ENCODE measurements at regions of chr18 and their contacts with region 1.

Region 1: GRCh38 chr18:58768293-58768974 is 96.2 kb upstream of the ZNF532 start:
- DNase-seq: peak; percentile 90
- H3K4me3 Mint-ChIP-seq: peak overlapping the region; percentile 67
- H3K27ac Mint-ChIP-seq: no peak overlapping the region
- H3K4me1 Mint-ChIP-seq: no peaks in the 10 kb centered on the region
- H3K27me3 Mint-ChIP-seq: peaks cover 27% of the 10 kb centered on the region
- CTCF ChIP-seq: peak; percentile 85

Region 2: GRCh38 chr18:58400337-58400870 is 368.0 kb before region 1 on chr18:
- CTCF ChIA-PET with region 1: interaction called, 3 read pairs
- intact Hi-C with region 1: loop called (anchors 1 kb)
- DNase-seq: no peak
- H3K4me3 Mint-ChIP-seq: no peak overlapping the region
- H3K27ac Mint-ChIP-seq: no peak overlapping the region
- H3K4me1 Mint-ChIP-seq: no peaks in the 10 kb centered on the region
- H3K27me3 Mint-ChIP-seq: no peaks in the 10 kb centered on the region
- CTCF ChIP-seq: no peak

Region 3: GRCh38 chr18:58493516-58494253 is 274.7 kb before region 1 on chr18:
- CTCF ChIA-PET with region 1: interaction called, 13 read pairs
- intact Hi-C with region 1: loop called (anchors 10 kb)
- DNase-seq: peak; percentile 80
- H3K4me3 Mint-ChIP-seq: no peak overlapping the region
- H3K27ac Mint-ChIP-seq: no peak overlapping the region
- H3K4me1 Mint-ChIP-seq: peaks cover 46% of the 10 kb centered on the region
- H3K27me3 Mint-ChIP-seq: peaks cover 4% of the 10 kb centered on the region
- CTCF ChIP-seq: peak; percentile 72

Region 4: GRCh38 chr18:59070181-59070912 is 301.9 kb after region 1 on chr18:
- CTCF ChIA-PET with region 1: interaction called, 43 read pairs
- intact Hi-C with region 1: loop called (anchors 1 kb)
- DNase-seq: peak; percentile 95
- H3K4me3 Mint-ChIP-seq: no peak overlapping the region
- H3K27ac Mint-ChIP-seq: no peak overlapping the region
- H3K4me1 Mint-ChIP-seq: peaks cover 30% of the 10 kb centered on the region
- H3K27me3 Mint-ChIP-seq: no peaks in the 10 kb centered on the region
- CTCF ChIP-seq: peak; percentile 94

Region 5: DNA sequence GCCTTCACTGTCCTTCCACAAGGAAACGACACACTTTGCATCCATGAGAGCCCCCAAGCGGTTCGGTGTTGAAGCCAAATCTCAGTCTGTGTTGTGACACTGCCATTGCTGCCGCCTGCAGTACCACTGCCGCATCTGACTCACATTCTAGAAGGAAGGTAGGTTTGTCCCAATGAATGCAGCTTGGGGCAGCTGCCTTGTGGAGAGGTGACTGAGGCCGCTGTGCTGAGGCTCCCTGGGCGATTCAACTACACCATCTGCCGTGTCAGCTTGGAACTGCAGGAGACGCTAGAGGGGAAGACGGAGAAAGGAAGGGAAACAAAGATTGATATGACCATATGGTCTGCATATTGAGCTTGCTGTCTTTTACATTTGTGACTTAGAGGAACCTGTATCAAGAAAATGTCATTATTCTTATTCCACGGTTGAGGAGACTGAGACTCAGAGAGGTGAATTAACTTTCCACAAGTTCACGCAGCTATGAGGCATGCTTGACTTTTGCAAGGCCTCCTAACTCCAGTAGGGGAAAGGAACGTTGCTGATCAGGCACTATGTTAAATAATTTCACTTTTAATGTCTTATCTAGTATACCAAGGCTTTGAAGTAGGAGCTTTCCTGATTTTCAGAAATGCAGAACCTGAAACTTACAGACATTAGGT is 634.1 kb after region 1 on chr18:
- CTCF ChIA-PET with region 1: interaction called, 13 read pairs
- intact Hi-C with region 1: no loop called
- DNase-seq: peak; percentile 89
- H3K4me3 Mint-ChIP-seq: no peak overlapping the region
- H3K27ac Mint-ChIP-seq: no peak overlapping the region
- H3K4me1 Mint-ChIP-seq: no peaks in the 10 kb centered on the region
- H3K27me3 Mint-ChIP-seq: no peaks in the 10 kb centered on the region
- CTCF ChIP-seq: peak; percentile 98

Measured in Calu3 (cell line).